Psoas muscle (tissue), 8 donors: ENCODE measurements at regions of chr7 and their contacts with region 1.

Region 1: GRCh38 chr7:13262929-13263530 is 575.6 kb downstream of the ARL4A start:
- DNase-seq: no peak
- ATAC-seq: peak in 2 of 4 donors; percentile 48 to 73
- H3K4me3 ChIP-seq: no peak overlapping the region
- H3K27ac ChIP-seq: no peak overlapping the region
- H3K4me1 ChIP-seq: no peaks in the 10 kb centered on the region
- H3K27me3 ChIP-seq: no peaks in the 10 kb centered on the region
- CTCF ChIP-seq: peak; percentile 60

Region 2: GRCh38 chr7:12524794-12525386 is 738.1 kb before region 1 on chr7:
- intact Hi-C with region 1: loop called (anchors 5 to 10 kb)
- DNase-seq: no peak
- ATAC-seq: no peak
- H3K4me3 ChIP-seq: no peak overlapping the region
- H3K27ac ChIP-seq: no peak overlapping the region
- H3K4me1 ChIP-seq: no peaks in the 10 kb centered on the region
- H3K27me3 ChIP-seq: no peaks in the 10 kb centered on the region
- CTCF ChIP-seq: peak; percentile 66

Region 3: DNA sequence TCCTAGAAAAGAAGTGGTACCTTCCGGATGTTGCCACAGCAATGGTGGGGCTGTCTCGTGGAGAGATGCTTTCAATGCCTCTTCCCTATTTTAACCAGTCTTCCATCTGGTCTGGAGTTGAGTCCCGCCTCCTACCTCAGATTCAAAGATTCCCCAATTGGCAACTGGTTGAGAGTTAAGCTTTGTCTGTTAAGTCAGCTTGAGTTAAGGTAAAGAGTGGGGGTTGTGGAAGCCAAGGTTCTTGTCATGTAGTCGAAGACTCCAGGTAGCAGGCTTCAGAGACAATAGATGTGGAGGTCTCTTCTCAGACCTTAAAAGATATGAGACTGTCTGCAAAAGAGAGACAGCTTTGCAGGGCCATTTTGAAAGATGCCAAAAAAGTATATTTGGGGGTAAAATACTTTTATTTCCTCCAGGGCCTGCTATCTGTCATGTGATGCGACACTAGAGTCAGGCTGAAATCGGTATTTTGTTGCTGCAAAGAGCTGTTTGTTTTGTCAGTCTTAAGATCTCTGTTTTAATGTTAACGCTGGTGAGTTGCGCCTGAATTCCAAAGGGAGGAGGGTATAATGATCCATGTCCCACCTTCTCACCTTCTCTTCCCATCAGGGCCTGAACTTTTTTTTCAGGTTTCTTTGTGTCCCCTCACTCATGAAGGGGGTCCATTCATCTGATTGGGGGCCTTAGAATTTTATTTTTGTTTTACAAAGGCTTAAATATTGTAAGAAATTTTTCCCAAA is 732.9 kb before region 1 on chr7:
- intact Hi-C with region 1: loop called (anchors 5 to 10 kb)
- DNase-seq: no peak
- ATAC-seq: no peak
- H3K4me3 ChIP-seq: no peak overlapping the region
- H3K27ac ChIP-seq: no peak overlapping the region
- H3K4me1 ChIP-seq: no peaks in the 10 kb centered on the region
- H3K27me3 ChIP-seq: no peaks in the 10 kb centered on the region
- CTCF ChIP-seq: no peak

Region 4: GRCh38 chr7:12638851-12639467 is 624.1 kb before region 1 on chr7:
- intact Hi-C with region 1: loop called (anchors 2 to 5 kb)
- DNase-seq: no peak
- ATAC-seq: peak in 1 of 4 donors; percentile 66
- H3K4me3 ChIP-seq: no peak overlapping the region
- H3K27ac ChIP-seq: no peak overlapping the region
- H3K4me1 ChIP-seq: no peaks in the 10 kb centered on the region
- H3K27me3 ChIP-seq: no peaks in the 10 kb centered on the region
- CTCF ChIP-seq: peak; percentile 60

Region 5: GRCh38 chr7:12686894-12687717 is 575.9 kb before region 1 on chr7 and contains the start of gene ARL4A:
- intact Hi-C with region 1: loop called (anchors 5 to 10 kb)
- DNase-seq: peak; percentile 98
- ATAC-seq: peak; percentile 96
- H3K4me3 ChIP-seq: peak within 1 kb of the TSS; percentile 97
- H3K27ac ChIP-seq: peak within 1 kb of the TSS; percentile 83
- H3K4me1 ChIP-seq: peaks cover 6% of the 10 kb centered on the region
- H3K27me3 ChIP-seq: no peaks in the 10 kb centered on the region
- CTCF ChIP-seq: peak; percentile 11
- total RNA-seq, gene ARL4A: 2.5 to 15.3 (median 5.2) TPM

Region 6: DNA sequence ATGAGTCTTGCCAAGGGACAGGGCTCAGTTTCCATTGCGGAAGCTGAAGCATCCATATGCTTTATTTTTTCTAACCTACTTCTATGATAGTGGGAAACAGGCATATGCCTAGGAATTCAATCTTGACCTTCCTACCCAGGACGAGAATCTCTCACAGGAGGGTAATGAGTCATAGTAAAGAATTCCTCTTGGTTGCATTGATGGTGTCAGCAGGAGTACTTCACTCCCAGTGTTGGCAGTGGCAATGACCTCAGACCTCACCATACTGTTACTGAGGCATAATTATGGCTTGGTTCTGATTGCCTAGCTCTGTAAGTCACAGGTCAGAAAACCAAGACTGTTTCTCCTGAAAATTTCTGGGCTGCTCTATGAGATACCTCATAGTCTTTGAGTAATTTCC is 22.7 kb before region 1 on chr7:
- intact Hi-C with region 1: no loop called
- DNase-seq: no peak
- ATAC-seq: no peak
- H3K4me3 ChIP-seq: no peak overlapping the region
- H3K27ac ChIP-seq: no peak overlapping the region
- H3K4me1 ChIP-seq: no peaks in the 10 kb centered on the region
- H3K27me3 ChIP-seq: no peaks in the 10 kb centered on the region
- CTCF ChIP-seq: no peak